GM13976 (cell line): ENCODE measurements at regions of chr11 and their contacts with region 1.

Region 1: GRCh38 chr11:82229341-82229740 is 504.3 kb downstream of the FAM181B start:
- DNase-seq: no peak
- CTCF ChIP-seq: peak; percentile 6

Region 2: GRCh38 chr11:81644239-81644840 is 585.0 kb before region 1 on chr11:
- in situ Hi-C with region 1: loop called (anchors 25 kb)
- DNase-seq: peak; percentile 23
- CTCF ChIP-seq: peak; percentile 50

Region 3: DNA sequence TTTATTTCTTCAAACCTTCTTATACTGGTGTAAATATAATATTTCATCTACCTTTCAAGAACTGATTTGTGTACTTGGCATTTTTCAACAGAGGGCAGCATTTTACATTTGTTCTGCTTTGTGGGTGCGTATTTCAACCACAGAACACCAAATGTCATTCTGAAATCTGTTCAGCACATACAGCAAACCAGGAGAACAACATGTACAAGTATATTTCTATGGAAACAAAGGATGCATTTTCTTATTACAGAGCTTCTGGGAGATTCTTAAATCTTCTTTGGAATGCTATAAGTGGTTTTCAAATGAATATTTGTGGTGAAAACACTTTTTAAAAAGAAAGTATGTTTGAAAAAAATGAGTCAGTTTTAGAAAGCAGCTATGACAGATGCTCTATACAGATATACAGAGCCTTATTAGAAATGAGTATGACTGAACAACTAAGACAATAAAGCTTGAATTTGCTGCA is 441.7 kb before region 1 on chr11:
- in situ Hi-C with region 1: loop called (anchors 25 kb)
- DNase-seq: peak; percentile 7
- CTCF ChIP-seq: no peak

Region 4: GRCh38 chr11:82384308-82384707 is 155.0 kb after region 1 on chr11:
- in situ Hi-C with region 1: no loop called
- DNase-seq: no peak
- CTCF ChIP-seq: no peak